Vagina (tissue), 2 donors: ENCODE measurements at regions of chr3 and their contacts with region 1.

Region 1: GRCh38 chr3:103134023-103134724 is 699.4 kb downstream of the ZPLD1 start:
- DNase-seq: no peak
- H3K4me3 ChIP-seq: no peak overlapping the region
- H3K27ac ChIP-seq: no peak overlapping the region
- H3K4me1 ChIP-seq: no peaks in the 10 kb centered on the region
- H3K27me3 ChIP-seq: no peaks in the 10 kb centered on the region
- CTCF ChIP-seq: no peak
- POLR2A ChIP-seq: no peak

Region 2: GRCh38 chr3:103170651-103171050 is 36.5 kb after region 1 on chr3:
- intact Hi-C with region 1: no loop called
- DNase-seq: no peak
- H3K4me3 ChIP-seq: no peak overlapping the region
- H3K27ac ChIP-seq: no peak overlapping the region
- H3K4me1 ChIP-seq: no peaks in the 10 kb centered on the region
- H3K27me3 ChIP-seq: no peaks in the 10 kb centered on the region
- CTCF ChIP-seq: no peak
- POLR2A ChIP-seq: no peak

Region 3: GRCh38 chr3:103227651-103228050 is 93.5 kb after region 1 on chr3:
- intact Hi-C with region 1: loop called (anchors 5 kb)
- DNase-seq: no peak
- H3K4me3 ChIP-seq: no peak overlapping the region
- H3K27ac ChIP-seq: no peak overlapping the region
- H3K4me1 ChIP-seq: no peaks in the 10 kb centered on the region
- H3K27me3 ChIP-seq: no peaks in the 10 kb centered on the region
- CTCF ChIP-seq: no peak
- POLR2A ChIP-seq: no peak